ENCODE measurements at regions of chr2 and their contacts with region 1.

Region 1: GRCh38 chr2:219308142-219309093 is 783 bp downstream of the PTPRN start:
- DNase-seq: peak; percentile 63
- H3K4me3 Mint-ChIP-seq: no peak overlapping the region
- H3K27ac Mint-ChIP-seq: peak overlapping the region; percentile 50
- H3K4me1 Mint-ChIP-seq: no peaks in the 10 kb centered on the region
- H3K27me3 Mint-ChIP-seq: peaks cover 47% of the 10 kb centered on the region

Region 2: DNA sequence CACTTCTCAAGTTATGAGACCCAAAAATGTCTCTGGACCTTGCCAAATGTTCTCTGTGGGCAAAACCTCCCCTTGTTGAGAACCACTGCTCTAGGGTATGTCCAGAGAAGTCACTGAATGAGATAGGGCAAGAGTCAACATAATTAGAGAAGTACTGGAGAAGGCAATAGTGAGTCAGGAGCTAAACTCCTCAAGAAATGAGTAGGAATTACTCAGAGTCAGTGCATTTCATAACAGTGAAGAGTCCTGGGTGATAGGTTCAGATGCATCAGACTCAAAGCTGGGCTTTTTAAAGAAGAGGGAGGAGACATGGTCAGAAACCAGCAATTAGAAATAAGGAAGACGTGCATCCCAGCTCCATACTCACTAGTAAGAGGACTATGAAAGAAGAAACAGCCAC is 209.1 kb before region 1 on chr2:
- intact Hi-C with region 1: no loop called
- DNase-seq: no peak
- H3K4me3 Mint-ChIP-seq: no peak overlapping the region
- H3K27ac Mint-ChIP-seq: no peak overlapping the region
- H3K4me1 Mint-ChIP-seq: peaks cover 6% of the 10 kb centered on the region
- H3K27me3 Mint-ChIP-seq: peaks cover 1% of the 10 kb centered on the region

Region 3: GRCh38 chr2:219331560-219332213 is 23.3 kb after region 1 on chr2:
- intact Hi-C with region 1: loop called (anchors 2 kb)
- DNase-seq: peak; percentile 9
- H3K4me3 Mint-ChIP-seq: no peak overlapping the region
- H3K27ac Mint-ChIP-seq: no peak overlapping the region
- H3K4me1 Mint-ChIP-seq: no peaks in the 10 kb centered on the region
- H3K27me3 Mint-ChIP-seq: peaks cover 33% of the 10 kb centered on the region

Region 4: DNA sequence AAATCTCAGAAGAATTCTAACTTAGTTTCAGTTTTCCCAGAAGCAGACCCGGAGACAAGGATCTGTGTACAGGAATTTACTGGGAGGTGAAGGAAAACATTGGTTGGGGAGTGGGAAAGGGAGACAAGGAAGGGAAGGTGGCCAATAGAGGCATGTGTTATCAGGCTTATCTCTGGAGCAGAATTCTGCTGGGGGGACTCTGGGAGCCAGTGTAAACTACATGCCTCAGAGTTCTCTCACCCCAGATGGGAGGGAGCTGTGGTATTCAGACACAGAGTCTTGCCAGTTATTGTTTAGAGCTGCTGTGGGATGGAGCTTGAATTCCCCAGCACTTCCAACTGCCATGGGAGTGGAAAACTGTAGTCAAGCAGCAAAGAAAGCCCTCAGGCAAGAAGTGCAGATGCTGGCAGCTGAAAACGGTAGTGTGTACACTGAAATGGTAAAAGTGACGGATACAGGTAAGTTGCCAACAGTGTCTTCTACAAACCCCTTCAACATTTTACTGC is 60.3 kb after region 1 on chr2:
- intact Hi-C with region 1: no loop called
- DNase-seq: no peak
- H3K4me3 Mint-ChIP-seq: no peak overlapping the region
- H3K27ac Mint-ChIP-seq: no peak overlapping the region
- H3K4me1 Mint-ChIP-seq: no peaks in the 10 kb centered on the region
- H3K27me3 Mint-ChIP-seq: no peaks in the 10 kb centered on the region

Measured in activated T-helper 1 cell treated with anti-CD3 and anti-CD28 coated beads, Interleukin-12 subunit alpha, Interleukin-12 subunit beta, Interleukin-2, Interleukin-4 antibody, amounts not matched to agents 30 ng/mL and 10 ng/mL and 1 ng/mL, durations not matched to agents 14 hours and 24 hours and 36 hours (primary cell).